IMR-90 (cell line): ENCODE measurements at regions of chr11 and their contacts with region 1.

Region 1: GRCh38 chr11:56799691-56800210 is 51.3 kb upstream of the OR9G4 start:
- DNase-seq: no peak
- ATAC-seq: no peak
- H3K4me3 ChIP-seq: no peak overlapping the region
- H3K27ac ChIP-seq: no peak overlapping the region
- H3K4me1 ChIP-seq: no peaks in the 10 kb centered on the region
- H3K27me3 ChIP-seq: no peaks in the 10 kb centered on the region
- CTCF ChIP-seq: no peak
- POLR2A ChIP-seq: no peak
- RAD21 ChIP-seq: no peak

Region 2: DNA sequence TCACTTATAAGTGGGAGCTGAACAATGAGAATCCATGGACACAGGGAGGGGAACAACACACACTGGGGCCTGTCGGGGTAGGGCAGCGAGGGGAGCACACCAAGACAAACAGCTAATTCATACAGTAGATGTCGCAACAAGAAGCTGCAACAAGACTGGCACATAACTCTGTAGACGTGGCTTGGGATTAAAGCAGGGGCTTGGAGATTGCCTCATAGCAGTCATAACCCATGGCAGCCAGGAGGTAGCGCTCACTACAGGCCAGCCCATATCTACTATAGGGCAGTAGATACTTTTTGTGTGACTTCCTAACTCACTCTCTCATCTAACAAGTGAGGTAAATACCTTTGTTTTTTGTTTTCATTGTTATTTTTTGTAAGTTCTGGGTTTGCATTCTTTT is 49.6 kb before region 1 on chr11:
- CTCF ChIA-PET with region 1: interaction called, 3 read pairs
- POLR2A ChIA-PET with region 1: no interaction called
- dilution Hi-C with region 1: no loop called
- in situ Hi-C with region 1: no loop called
- intact Hi-C with region 1: loop called (anchors 10 kb)
- DNase-seq: no peak
- ATAC-seq: no peak
- H3K4me3 ChIP-seq: no peak overlapping the region
- H3K27ac ChIP-seq: no peak overlapping the region
- H3K4me1 ChIP-seq: no peaks in the 10 kb centered on the region
- H3K27me3 ChIP-seq: no peaks in the 10 kb centered on the region
- CTCF ChIP-seq: no peak
- POLR2A ChIP-seq: no peak
- RAD21 ChIP-seq: no peak